Heart left ventricle (tissue), 16 donors: ENCODE measurements at regions of chr20 and their contacts with region 1.

Region 1: GRCh38 chr20:10476319-10476724 is 41.2 kb downstream of the SLX4IP start:
- DNase-seq: no peak
- ATAC-seq: peak in 3 of 4 donors; percentile 22 to 57 (median 52)
- H3K4me3 ChIP-seq: no peak overlapping the region
- H3K27ac ChIP-seq: peak overlapping the region in 1 of 12 donors; percentile 67
- H3K4me1 ChIP-seq: peaks cover 0 to 40% (median 12%) of the 10 kb centered on the region in 12 donors
- H3K27me3 ChIP-seq: no peaks in the 10 kb centered on the region
- CTCF ChIP-seq: no peak
- POLR2A ChIP-seq: no peak

Region 2: GRCh38 chr20:10521068-10521831 is 44.9 kb after region 1 on chr20:
- intact Hi-C with region 1: loop called in 1 of 10 experiments (anchors 10 kb)
- DNase-seq: no peak
- ATAC-seq: no peak
- H3K4me3 ChIP-seq: no peak overlapping the region
- H3K27ac ChIP-seq: peak overlapping the region in 1 of 12 donors; percentile 80
- H3K4me1 ChIP-seq: peaks cover 0 to 36% (median 2%) of the 10 kb centered on the region in 12 donors
- H3K27me3 ChIP-seq: no peaks in the 10 kb centered on the region
- CTCF ChIP-seq: no peak
- POLR2A ChIP-seq: no peak

Region 3: GRCh38 chr20:10536531-10536930 is 60.2 kb after region 1 on chr20:
- intact Hi-C with region 1: loop called in 2 of 10 experiments (anchors 5 to 10 kb)
- DNase-seq: no peak
- ATAC-seq: no peak
- H3K4me3 ChIP-seq: no peak overlapping the region
- H3K27ac ChIP-seq: no peak overlapping the region
- H3K4me1 ChIP-seq: peaks cover 0 to 15% (median 5%) of the 10 kb centered on the region in 12 donors
- H3K27me3 ChIP-seq: no peaks in the 10 kb centered on the region
- CTCF ChIP-seq: peak in 6 of 12 donors; percentile 15 to 39 (median 36)
- POLR2A ChIP-seq: no peak

Region 4: DNA sequence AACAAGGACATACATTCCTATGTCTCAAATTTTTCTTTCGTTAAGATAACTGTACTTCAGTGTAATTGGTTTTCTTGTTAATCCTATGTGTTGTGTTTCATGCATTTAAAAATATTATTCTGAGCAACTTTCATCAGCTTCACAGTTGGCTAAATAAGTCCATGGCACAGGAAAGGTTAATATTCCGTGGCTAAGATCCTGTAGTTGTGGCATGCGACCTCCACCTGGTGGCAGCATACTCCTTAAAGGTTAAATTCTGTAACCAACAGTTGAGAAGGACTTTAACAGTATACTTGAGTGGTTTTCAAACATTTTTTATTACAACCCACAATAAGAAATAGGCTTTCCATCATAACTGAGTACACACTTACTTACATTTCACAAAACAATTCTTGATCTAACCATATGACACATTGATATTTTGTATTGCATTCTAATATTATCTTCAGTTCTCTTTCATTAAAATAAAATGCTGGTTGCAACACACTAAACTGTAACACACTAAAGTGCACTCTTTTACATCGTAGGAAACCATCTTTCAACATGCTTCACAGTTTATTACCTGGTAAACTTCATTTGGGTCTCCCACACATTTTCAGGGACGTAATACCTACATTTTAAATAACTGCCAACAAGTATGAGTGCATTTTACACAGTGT is 77.1 kb after region 1 on chr20:
- intact Hi-C with region 1: loop called in 1 of 10 experiments (anchors 10 kb)
- DNase-seq: peak; percentile 42 to 76 (median 60)
- ATAC-seq: peak; percentile 61 to 83 (median 66)
- H3K4me3 ChIP-seq: no peak overlapping the region
- H3K27ac ChIP-seq: no peak overlapping the region
- H3K4me1 ChIP-seq: peaks cover 0 to 43% (median 0%) of the 10 kb centered on the region in 12 donors
- H3K27me3 ChIP-seq: no peaks in the 10 kb centered on the region
- CTCF ChIP-seq: peak; percentile 68 to 89 (median 84)
- POLR2A ChIP-seq: no peak

Region 5: GRCh38 chr20:10667077-10667401 is 190.7 kb after region 1 on chr20:
- intact Hi-C with region 1: loop called in 3 of 10 experiments (anchors 5 to 10 kb)
- DNase-seq: peak; percentile 52 to 75 (median 60)
- ATAC-seq: peak in 2 of 4 donors; percentile 5 to 21
- H3K4me3 ChIP-seq: peak overlapping the region in 9 of 12 donors; percentile 19 to 98 (median 34)
- H3K27ac ChIP-seq: peak overlapping the region in 11 of 12 donors; percentile 20 to 78 (median 63)
- H3K4me1 ChIP-seq: peaks cover 10 to 81% (median 60%) of the 10 kb centered on the region in 12 donors
- H3K27me3 ChIP-seq: no peaks in the 10 kb centered on the region
- CTCF ChIP-seq: no peak
- POLR2A ChIP-seq: no peak

Region 6: GRCh38 chr20:10682939-10683338 is 206.6 kb after region 1 on chr20:
- intact Hi-C with region 1: no loop called
- DNase-seq: no peak
- ATAC-seq: no peak
- H3K4me3 ChIP-seq: no peak overlapping the region
- H3K27ac ChIP-seq: no peak overlapping the region
- H3K4me1 ChIP-seq: no peaks in the 10 kb centered on the region
- H3K27me3 ChIP-seq: no peaks in the 10 kb centered on the region
- CTCF ChIP-seq: no peak
- POLR2A ChIP-seq: no peak

Region 7: GRCh38 chr20:10783707-10784578 is 307.6 kb after region 1 on chr20:
- intact Hi-C with region 1: no loop called
- DNase-seq: no peak
- ATAC-seq: peak in 3 of 4 donors; percentile 36 to 42 (median 39)
- H3K4me3 ChIP-seq: no peak overlapping the region
- H3K27ac ChIP-seq: no peak overlapping the region
- H3K4me1 ChIP-seq: peaks cover 0 to 10% (median 0%) of the 10 kb centered on the region in 12 donors
- H3K27me3 ChIP-seq: no peaks in the 10 kb centered on the region
- CTCF ChIP-seq: no peak
- POLR2A ChIP-seq: no peak